Head of caudate nucleus (tissue), 42 donors: ENCODE measurements at regions of chr6 and their contacts with region 1.

Region 1: GRCh38 chr6:41591859-41592502 is 45.8 kb downstream of the FOXP4 start:
- DNase-seq: peak; percentile 47 to 95 (median 85)

Region 2: GRCh38 chr6:41367700-41368099 is 224.3 kb before region 1 on chr6:
- intact Hi-C with region 1: loop called (anchors 2 kb)
- DNase-seq: peak; percentile 32 to 87 (median 74)

Region 3: DNA sequence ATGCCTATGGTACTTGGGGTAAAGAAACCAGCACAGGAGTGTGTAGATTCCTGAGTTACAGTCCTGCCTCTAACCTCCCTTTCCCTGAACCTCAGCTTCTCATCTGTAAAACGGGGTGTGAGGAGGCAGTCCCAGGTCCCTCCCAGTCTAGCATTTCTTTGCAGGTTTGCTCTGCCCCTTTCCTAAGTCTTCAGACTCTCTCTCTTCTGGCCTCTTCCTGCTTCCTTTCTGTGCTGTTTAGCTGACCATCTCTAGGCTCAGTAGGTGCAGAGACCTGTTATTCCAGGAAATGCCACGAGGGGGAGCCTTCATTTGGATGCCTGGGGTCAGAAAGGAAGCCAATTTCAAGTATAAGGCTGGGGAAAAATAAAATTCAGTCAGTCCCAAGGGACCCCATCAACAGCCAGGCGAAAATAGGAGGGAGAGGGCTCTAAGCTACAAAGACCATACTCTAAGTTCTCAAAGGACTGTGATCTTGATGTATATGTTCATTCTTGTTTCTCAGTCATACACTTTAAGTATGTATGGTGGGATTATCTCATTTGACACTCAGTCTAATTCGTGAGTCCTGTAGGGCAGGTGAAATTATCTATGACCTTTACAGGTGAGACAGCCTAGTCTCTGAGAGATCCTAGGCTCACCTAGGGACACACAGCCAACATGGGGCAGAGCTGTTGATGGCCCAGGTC is 167.5 kb before region 1 on chr6:
- intact Hi-C with region 1: loop called (anchors 5 kb)
- DNase-seq: peak; percentile 38 to 97 (median 91)

Region 4: GRCh38 chr6:41545703-41546474 is 46.1 kb before region 1 on chr6 and contains the start of gene FOXP4:
- intact Hi-C with region 1: loop called (anchors 5 kb)
- DNase-seq: peak; percentile 76 to 98 (median 94)